CD14-positive monocyte (primary cell): ENCODE measurements at regions of chr18 and their contacts with region 1.

Region 1: GRCh38 chr18:58529714-58530354 is 99.1 kb downstream of the ALPK2 start:
- DNase-seq: peak; percentile 30 to 66 (median 65)
- H3K4me3 ChIP-seq: no peak overlapping the region
- H3K4me3 Mint-ChIP-seq: no peak overlapping the region
- H3K27ac ChIP-seq: no peak overlapping the region
- H3K27ac Mint-ChIP-seq: peak overlapping the region in 1 of 7 donors; percentile 46
- H3K4me1 ChIP-seq: peaks cover 5 to 6% of the 10 kb centered on the region in 2 donors
- H3K4me1 Mint-ChIP-seq: peaks cover 25% of the 10 kb centered on the region
- H3K27me3 ChIP-seq: peaks cover 0 to 5% of the 10 kb centered on the region in 2 donors
- H3K27me3 Mint-ChIP-seq: peaks cover 1 to 11% (median 10%) of the 10 kb centered on the region in 3 donors
- CTCF ChIP-seq: peak; percentile 97

Region 2: GRCh38 chr18:58567453-58568196 is 37.8 kb after region 1 on chr18:
- intact Hi-C with region 1: loop called (anchors 2 to 5 kb)
- DNase-seq: no peak
- H3K4me3 ChIP-seq: no peak overlapping the region
- H3K4me3 Mint-ChIP-seq: no peak overlapping the region
- H3K27ac ChIP-seq: no peak overlapping the region
- H3K27ac Mint-ChIP-seq: peak overlapping the region in 1 of 7 donors; percentile 70
- H3K4me1 ChIP-seq: peaks cover 20 to 39% of the 10 kb centered on the region in 2 donors
- H3K4me1 Mint-ChIP-seq: peaks cover 24% of the 10 kb centered on the region
- H3K27me3 ChIP-seq: no peaks in the 10 kb centered on the region
- H3K27me3 Mint-ChIP-seq: peaks cover 5 to 9% (median 7%) of the 10 kb centered on the region in 3 donors
- CTCF ChIP-seq: no peak

Region 3: GRCh38 chr18:58605027-58606020 is 75.5 kb after region 1 on chr18:
- intact Hi-C with region 1: loop called in 1 of 2 experiments (anchors 10 kb)
- DNase-seq: peak; percentile 48 to 79 (median 56)
- H3K4me3 ChIP-seq: no peak overlapping the region
- H3K4me3 Mint-ChIP-seq: no peak overlapping the region
- H3K27ac ChIP-seq: peak overlapping the region in 1 of 2 donors; percentile 11
- H3K27ac Mint-ChIP-seq: peak overlapping the region in 3 of 7 donors; percentile 16 to 86 (median 79)
- H3K4me1 ChIP-seq: peaks cover 13 to 16% of the 10 kb centered on the region in 2 donors
- H3K4me1 Mint-ChIP-seq: peaks cover 25% of the 10 kb centered on the region
- H3K27me3 ChIP-seq: peaks cover 0 to 9% of the 10 kb centered on the region in 2 donors
- H3K27me3 Mint-ChIP-seq: peaks cover 3 to 12% (median 9%) of the 10 kb centered on the region in 3 donors
- CTCF ChIP-seq: no peak

Region 4: GRCh38 chr18:58671111-58671631 is 141.3 kb after region 1 on chr18 and contains the start of gene MALT1:
- intact Hi-C with region 1: loop called (anchors 5 kb)
- DNase-seq: peak; percentile 90 to 92 (median 90)
- H3K4me3 ChIP-seq: peak within 1 kb of the TSS; percentile 78 to 98 (median 93)
- H3K4me3 Mint-ChIP-seq: peak within 1 kb of the TSS; percentile 96 to 97
- H3K27ac ChIP-seq: peak within 1 kb of the TSS; percentile 86 to 90
- H3K27ac Mint-ChIP-seq: peak within 1 kb of the TSS; percentile 95 to 99 (median 97)
- H3K4me1 ChIP-seq: peaks cover 34 to 50% of the 10 kb centered on the region in 2 donors
- H3K4me1 Mint-ChIP-seq: peaks cover 53% of the 10 kb centered on the region
- H3K27me3 ChIP-seq: no peaks in the 10 kb centered on the region
- H3K27me3 Mint-ChIP-seq: peaks cover 1 to 3% (median 3%) of the 10 kb centered on the region in 3 donors
- CTCF ChIP-seq: no peak
- polyA plus RNA-seq, gene MALT1: 18.3 to 24.9 (median 23.8) TPM

Region 5: DNA sequence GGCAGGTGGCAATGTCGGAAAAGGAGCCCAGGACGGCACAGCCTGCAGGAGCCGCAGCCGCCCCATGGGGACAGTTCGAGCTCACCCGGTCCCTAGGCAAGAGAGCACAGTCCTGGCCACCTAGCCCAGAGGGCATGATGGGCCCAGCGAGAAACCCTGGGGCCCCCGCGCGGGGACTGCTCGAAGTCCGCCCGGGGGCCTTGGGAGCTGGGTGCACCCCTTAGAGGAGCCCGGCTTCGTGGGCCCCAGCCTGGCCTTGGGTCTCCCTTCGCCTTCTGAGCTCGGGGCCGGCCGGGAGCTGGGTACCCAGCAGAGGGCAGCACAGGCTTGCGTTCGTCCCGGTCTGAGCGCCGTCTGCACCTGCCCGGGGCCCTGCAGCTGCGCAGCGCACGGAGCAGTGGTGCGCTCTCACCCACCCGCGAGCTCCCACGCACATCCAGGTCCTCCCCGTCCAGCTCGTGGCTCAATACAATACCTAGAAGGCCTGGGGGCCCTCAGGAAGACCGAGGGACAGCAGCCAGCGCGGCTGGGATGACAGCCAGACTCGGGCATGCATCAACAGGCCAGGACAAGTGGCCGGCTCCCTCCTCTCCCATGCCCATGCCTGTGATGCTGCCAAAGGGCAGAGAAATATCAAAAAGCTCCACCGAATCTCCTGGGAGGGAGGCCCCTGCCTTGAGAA is 238.6 kb after region 1 on chr18:
- intact Hi-C with region 1: loop called (anchors 10 kb)
- DNase-seq: peak; percentile 12 to 44 (median 14)
- H3K4me3 ChIP-seq: no peak overlapping the region
- H3K4me3 Mint-ChIP-seq: peak overlapping the region; percentile 53 to 85
- H3K27ac ChIP-seq: no peak overlapping the region
- H3K27ac Mint-ChIP-seq: peak overlapping the region in 1 of 7 donors; percentile 14
- H3K4me1 ChIP-seq: peaks cover 0 to 4% of the 10 kb centered on the region in 2 donors
- H3K4me1 Mint-ChIP-seq: peaks cover 12% of the 10 kb centered on the region
- H3K27me3 ChIP-seq: peaks cover 0 to 28% of the 10 kb centered on the region in 2 donors
- H3K27me3 Mint-ChIP-seq: peaks cover 28 to 56% (median 28%) of the 10 kb centered on the region in 3 donors
- CTCF ChIP-seq: peak; percentile 77